Endothelial cell of umbilical vein (primary cell): ENCODE measurements at regions of chr11 and their contacts with region 1.

Region 1: DNA sequence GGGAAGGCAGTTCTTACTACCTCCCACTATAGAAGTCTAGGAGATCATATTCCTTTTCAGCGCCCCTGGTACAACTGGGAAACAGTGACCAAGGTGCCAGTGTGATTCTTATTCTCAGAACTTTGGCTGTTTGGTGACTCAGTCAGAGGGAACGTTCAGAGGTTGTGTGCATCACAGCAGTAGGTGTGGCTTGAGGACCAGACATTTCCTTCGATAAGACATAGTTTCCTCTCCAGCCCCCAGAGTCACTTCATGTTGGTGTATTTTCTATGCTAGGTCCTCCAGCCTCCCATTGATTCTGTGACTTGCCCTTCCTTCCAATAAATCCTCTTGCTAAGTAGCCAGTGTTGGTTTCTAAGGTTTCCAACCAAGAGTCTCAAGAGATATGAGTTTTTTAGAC is 171.9 kb upstream of the MPPED2 start:
- DNase-seq: peak; percentile 70
- H3K4me3 ChIP-seq: no peak overlapping the region
- H3K27ac ChIP-seq: no peak overlapping the region
- H3K4me1 ChIP-seq: peaks cover 9% of the 10 kb centered on the region
- H3K27me3 ChIP-seq: no peaks in the 10 kb centered on the region
- CTCF ChIP-seq: no peak
- POLR2A ChIP-seq: no peak

Region 2: DNA sequence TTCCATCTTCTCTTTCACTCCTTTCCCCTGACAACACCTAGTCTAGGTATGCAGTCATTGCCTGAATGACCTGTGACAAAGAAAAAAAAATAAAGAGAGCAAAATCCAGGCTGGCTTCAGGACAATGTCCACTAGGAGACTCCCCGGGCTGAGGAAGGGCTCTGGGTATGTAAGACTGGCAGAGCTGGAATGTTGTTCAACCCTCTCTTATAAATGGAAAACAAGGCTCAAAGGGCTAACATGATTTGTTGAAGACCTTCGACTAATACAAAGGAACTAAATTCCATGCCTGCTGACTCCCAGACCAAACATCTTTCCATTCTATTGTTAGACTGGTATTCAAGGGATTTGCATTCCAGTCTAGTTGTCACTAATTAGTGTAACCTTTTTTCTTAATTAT is 313.0 kb before region 1 on chr11:
- CTCF ChIA-PET with region 1: no interaction called
- POLR2A ChIA-PET with region 1: no interaction called
- dilution Hi-C with region 1: no loop called
- intact Hi-C with region 1: no loop called
- DNase-seq: no peak
- H3K4me3 ChIP-seq: no peak overlapping the region
- H3K27ac ChIP-seq: no peak overlapping the region
- H3K4me1 ChIP-seq: no peaks in the 10 kb centered on the region
- H3K27me3 ChIP-seq: no peaks in the 10 kb centered on the region
- CTCF ChIP-seq: no peak
- POLR2A ChIP-seq: no peak

Region 3: GRCh38 chr11:30729187-30729713 is 28.8 kb before region 1 on chr11:
- CTCF ChIA-PET with region 1: no interaction called
- POLR2A ChIA-PET with region 1: no interaction called
- dilution Hi-C with region 1: no loop called
- intact Hi-C with region 1: loop called (anchors 2 kb)
- DNase-seq: peak; percentile 2
- H3K4me3 ChIP-seq: no peak overlapping the region
- H3K27ac ChIP-seq: no peak overlapping the region
- H3K4me1 ChIP-seq: peaks cover 2% of the 10 kb centered on the region
- H3K27me3 ChIP-seq: no peaks in the 10 kb centered on the region
- CTCF ChIP-seq: no peak
- POLR2A ChIP-seq: no peak

Region 4: DNA sequence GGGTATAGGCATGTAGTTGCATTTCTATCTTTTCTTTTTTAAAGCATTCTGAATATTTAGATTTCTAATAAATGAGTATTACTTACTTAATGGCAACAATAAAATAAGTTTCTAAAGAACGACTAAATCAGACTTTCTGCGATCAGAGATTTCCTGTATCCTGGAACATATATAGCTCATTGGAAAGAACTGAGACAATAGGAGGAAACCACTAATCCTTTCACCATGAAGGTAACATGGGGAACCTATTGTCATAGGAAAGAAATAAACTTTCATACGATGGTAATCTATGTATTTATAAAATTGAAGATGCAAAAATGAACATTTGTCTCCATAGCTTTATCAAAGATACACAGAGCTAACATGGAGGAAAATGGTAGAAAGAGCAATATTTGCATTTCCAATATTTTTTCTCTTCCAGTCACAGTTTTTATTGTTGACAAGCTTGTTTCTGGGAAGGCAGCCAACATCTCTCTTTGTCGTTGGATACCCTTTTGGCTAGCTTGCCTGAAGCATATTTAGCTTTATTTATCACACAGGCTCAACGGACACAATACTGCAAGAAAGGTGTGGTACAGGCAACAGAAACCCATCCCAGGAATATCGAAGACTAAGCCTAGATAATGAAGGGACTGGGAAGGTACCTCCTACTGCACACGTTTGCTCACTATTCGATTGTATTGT is 121.5 kb after region 1 on chr11:
- CTCF ChIA-PET with region 1: no interaction called
- POLR2A ChIA-PET with region 1: no interaction called
- dilution Hi-C with region 1: no loop called
- intact Hi-C with region 1: loop called (anchors 5 kb)
- DNase-seq: peak; percentile 83
- H3K4me3 ChIP-seq: peak overlapping the region in 1 of 3 experiments; percentile 39
- H3K27ac ChIP-seq: peak overlapping the region; percentile 29
- H3K4me1 ChIP-seq: peaks cover 16% of the 10 kb centered on the region
- H3K27me3 ChIP-seq: no peaks in the 10 kb centered on the region
- CTCF ChIP-seq: no peak
- POLR2A ChIP-seq: no peak